ENCODE measurements at regions of chr11 and their contacts with region 1.

Region 1: DNA sequence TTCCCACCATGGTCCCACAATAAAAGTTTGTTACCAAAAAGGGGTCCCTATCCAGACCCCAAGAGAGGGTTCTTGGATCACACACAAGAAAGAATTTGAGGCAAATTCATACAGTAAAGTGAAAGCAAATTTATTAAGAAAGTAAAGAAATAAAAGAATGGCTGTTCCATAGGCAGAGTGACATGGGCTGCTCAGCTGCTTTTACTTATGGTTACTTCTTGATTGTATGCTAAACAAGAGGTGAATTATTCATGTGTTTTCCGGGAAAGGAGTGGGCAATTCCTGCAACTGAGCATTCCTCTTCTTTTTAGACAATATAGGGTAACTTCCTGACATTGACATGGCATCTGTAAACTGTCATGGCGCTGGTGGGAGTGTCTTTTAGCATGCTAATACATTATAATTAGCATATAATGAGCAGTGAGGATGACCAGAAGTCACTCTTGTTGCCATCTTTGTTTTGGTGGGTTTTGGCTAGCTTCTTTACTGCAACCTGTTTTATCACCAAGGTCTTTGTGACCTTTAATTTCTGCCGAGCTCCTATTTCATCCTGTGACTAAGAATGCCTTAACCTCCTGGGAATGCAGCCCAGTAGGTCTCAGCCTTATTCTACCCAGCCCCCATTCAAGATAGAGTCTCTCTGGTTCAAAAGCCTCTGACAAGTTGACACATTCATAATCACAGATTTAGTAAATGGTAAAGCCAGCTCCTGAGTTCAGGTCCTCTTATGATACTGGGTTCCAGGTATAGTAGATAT is 240.7 kb upstream of the PDGFD start:
- DNase-seq: no peak
- ATAC-seq: no peak
- H3K4me3 ChIP-seq: no peak overlapping the region
- H3K4me3 Mint-ChIP-seq: no peak overlapping the region
- H3K27ac ChIP-seq: no peak overlapping the region
- H3K27ac Mint-ChIP-seq: no peak overlapping the region
- H3K4me1 ChIP-seq: no peaks in the 10 kb centered on the region
- H3K4me1 Mint-ChIP-seq: peaks cover 8% of the 10 kb centered on the region
- H3K27me3 ChIP-seq: no peaks in the 10 kb centered on the region
- H3K27me3 Mint-ChIP-seq: no peaks in the 10 kb centered on the region
- CTCF ChIP-seq: no peak

Region 2: DNA sequence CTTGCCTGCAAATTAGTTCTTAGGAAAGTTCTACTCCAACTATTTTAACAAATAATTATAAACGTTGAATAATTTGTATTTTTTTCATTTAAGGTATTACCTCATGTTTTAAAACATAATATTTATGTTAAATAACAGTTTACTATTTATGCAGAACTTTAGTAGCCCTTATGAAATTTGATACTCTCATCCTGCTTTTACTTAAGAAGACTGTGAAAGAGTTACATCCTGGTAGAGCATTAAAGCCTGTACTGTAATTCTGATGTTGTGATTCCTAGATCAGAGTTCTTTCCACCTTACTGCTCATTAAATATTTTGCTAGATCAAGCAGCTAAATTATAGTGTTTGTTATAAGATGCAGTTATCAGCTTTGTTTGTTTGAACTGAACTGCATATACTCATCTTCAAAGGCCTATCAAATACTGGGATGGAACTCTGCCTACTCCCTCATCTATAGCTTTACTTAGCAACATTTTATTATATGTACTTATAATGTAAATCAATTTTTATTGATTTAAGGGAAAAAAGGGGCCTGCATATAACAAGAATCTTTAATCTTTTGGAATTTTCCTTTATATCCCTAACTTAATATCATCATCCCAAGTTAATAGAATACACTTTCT is 991.2 kb before region 1 on chr11:
- CTCF ChIA-PET with region 1: no interaction called
- POLR2A ChIA-PET with region 1: no interaction called
- intact Hi-C with region 1: no loop called
- DNase-seq: no peak
- ATAC-seq: no peak
- H3K4me3 ChIP-seq: no peak overlapping the region
- H3K4me3 Mint-ChIP-seq: no peak overlapping the region
- H3K27ac ChIP-seq: no peak overlapping the region
- H3K27ac Mint-ChIP-seq: no peak overlapping the region
- H3K4me1 ChIP-seq: no peaks in the 10 kb centered on the region
- H3K4me1 Mint-ChIP-seq: no peaks in the 10 kb centered on the region
- H3K27me3 ChIP-seq: no peaks in the 10 kb centered on the region
- H3K27me3 Mint-ChIP-seq: no peaks in the 10 kb centered on the region
- CTCF ChIP-seq: no peak

Region 3: GRCh38 chr11:104352036-104352435 is 52.6 kb before region 1 on chr11:
- CTCF ChIA-PET with region 1: no interaction called
- POLR2A ChIA-PET with region 1: no interaction called
- intact Hi-C with region 1: no loop called
- DNase-seq: no peak
- ATAC-seq: no peak
- H3K4me3 ChIP-seq: no peak overlapping the region
- H3K4me3 Mint-ChIP-seq: no peak overlapping the region
- H3K27ac ChIP-seq: no peak overlapping the region
- H3K27ac Mint-ChIP-seq: no peak overlapping the region
- H3K4me1 ChIP-seq: no peaks in the 10 kb centered on the region
- H3K4me1 Mint-ChIP-seq: no peaks in the 10 kb centered on the region
- H3K27me3 ChIP-seq: no peaks in the 10 kb centered on the region
- H3K27me3 Mint-ChIP-seq: no peaks in the 10 kb centered on the region
- CTCF ChIP-seq: no peak

Region 4: DNA sequence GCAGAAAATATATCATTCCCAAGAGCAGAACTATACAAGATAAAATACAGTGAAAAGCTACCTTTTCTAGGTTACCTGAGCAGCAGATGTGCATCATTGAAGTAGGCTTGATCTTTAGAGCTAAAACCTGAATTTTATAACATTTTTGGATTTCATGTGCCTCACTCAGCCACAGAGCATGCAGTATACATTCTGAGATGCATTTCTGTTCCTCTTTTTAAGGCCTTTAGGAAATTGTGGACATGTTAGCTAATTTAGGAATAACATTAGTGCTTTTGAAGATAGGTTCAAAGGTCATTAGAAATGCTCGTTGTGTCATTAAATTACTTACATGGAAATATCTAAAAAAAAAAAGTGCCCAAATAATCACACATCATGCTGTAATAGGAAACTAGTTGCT is 10.1 kb before region 1 on chr11:
- CTCF ChIA-PET with region 1: no interaction called
- POLR2A ChIA-PET with region 1: no interaction called
- intact Hi-C with region 1: loop called (anchors 1 kb)
- DNase-seq: no peak
- ATAC-seq: no peak
- H3K4me3 ChIP-seq: no peak overlapping the region
- H3K4me3 Mint-ChIP-seq: no peak overlapping the region
- H3K27ac ChIP-seq: no peak overlapping the region
- H3K27ac Mint-ChIP-seq: no peak overlapping the region
- H3K4me1 ChIP-seq: no peaks in the 10 kb centered on the region
- H3K4me1 Mint-ChIP-seq: no peaks in the 10 kb centered on the region
- H3K27me3 ChIP-seq: no peaks in the 10 kb centered on the region
- H3K27me3 Mint-ChIP-seq: no peaks in the 10 kb centered on the region
- CTCF ChIP-seq: no peak

Region 5: GRCh38 chr11:104487046-104487806 is 82.6 kb after region 1 on chr11:
- CTCF ChIA-PET with region 1: no interaction called
- POLR2A ChIA-PET with region 1: no interaction called
- intact Hi-C with region 1: no loop called
- DNase-seq: no peak
- ATAC-seq: no peak
- H3K4me3 ChIP-seq: no peak overlapping the region
- H3K4me3 Mint-ChIP-seq: no peak overlapping the region
- H3K27ac ChIP-seq: no peak overlapping the region
- H3K27ac Mint-ChIP-seq: no peak overlapping the region
- H3K4me1 ChIP-seq: no peaks in the 10 kb centered on the region
- H3K4me1 Mint-ChIP-seq: no peaks in the 10 kb centered on the region
- H3K27me3 ChIP-seq: no peaks in the 10 kb centered on the region
- H3K27me3 Mint-ChIP-seq: no peaks in the 10 kb centered on the region
- CTCF ChIP-seq: no peak

Measured in B cell (primary cell).